IMR-90 (cell line): ENCODE measurements at regions of chr15 and their contacts with region 1.

Region 1: GRCh38 chr15:98076021-98076816 is 115.7 kb downstream of the ARRDC4 start:
- DNase-seq: no peak
- ATAC-seq: no peak
- H3K4me3 ChIP-seq: no peak overlapping the region
- H3K27ac ChIP-seq: no peak overlapping the region
- H3K4me1 ChIP-seq: no peaks in the 10 kb centered on the region
- H3K27me3 ChIP-seq: no peaks in the 10 kb centered on the region
- CTCF ChIP-seq: no peak
- POLR2A ChIP-seq: no peak
- RAD21 ChIP-seq: no peak

Region 2: DNA sequence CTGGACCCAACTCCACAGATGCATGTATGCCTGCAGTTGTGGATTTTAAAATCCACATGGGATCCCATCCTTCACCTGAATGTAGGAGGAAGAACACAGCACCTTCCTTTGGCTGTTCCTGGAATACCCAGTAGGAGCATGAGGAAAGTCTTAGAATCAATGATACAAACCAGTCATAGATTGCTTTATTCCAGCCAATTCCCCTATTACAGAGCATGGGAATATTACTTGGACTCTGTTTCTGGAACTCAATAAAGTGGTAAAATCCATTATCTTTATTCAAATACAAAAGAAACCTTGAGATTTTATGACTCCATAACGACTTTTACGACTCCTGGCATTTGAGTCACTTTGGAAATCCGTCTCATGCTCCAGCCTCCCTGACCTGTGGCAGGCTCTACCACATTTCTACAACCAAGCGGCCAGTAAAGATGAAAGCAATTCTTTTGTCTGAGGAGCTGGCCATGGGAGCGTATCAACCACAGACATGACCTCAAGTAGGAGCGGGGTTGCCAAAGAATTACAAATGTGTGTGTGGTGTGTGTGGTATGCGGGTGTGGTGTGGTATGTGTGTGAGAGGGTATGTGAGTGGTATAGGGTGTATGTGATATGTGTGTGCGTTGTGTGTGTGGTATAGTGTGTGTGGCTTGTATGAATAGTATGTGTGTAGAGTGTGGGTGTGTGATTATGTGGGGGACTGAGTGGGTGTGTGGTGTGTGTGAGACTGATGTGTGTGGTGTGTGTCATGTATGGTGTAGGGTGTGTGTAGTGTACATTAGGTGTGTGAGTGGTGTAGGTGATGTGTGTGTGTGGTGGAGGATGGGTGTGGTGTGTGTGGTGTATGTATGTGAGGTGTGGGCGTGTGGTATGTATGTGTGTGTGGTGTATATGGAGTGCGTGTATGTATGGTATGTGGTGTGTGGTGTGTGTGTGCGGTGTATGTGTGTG is 75.7 kb before region 1 on chr15:
- CTCF ChIA-PET with region 1: no interaction called
- POLR2A ChIA-PET with region 1: no interaction called
- dilution Hi-C with region 1: no loop called
- in situ Hi-C with region 1: no loop called
- intact Hi-C with region 1: loop called (anchors 10 kb)
- DNase-seq: no peak
- ATAC-seq: no peak
- H3K4me3 ChIP-seq: no peak overlapping the region
- H3K27ac ChIP-seq: no peak overlapping the region
- H3K4me1 ChIP-seq: no peaks in the 10 kb centered on the region
- H3K27me3 ChIP-seq: no peaks in the 10 kb centered on the region
- CTCF ChIP-seq: no peak
- POLR2A ChIP-seq: no peak
- RAD21 ChIP-seq: no peak